Activated B cell treated with CpG ODN at 0.5 μM for 24 hours (primary cell): ENCODE measurements at regions of chr2 and their contacts with region 1.

Region 1: GRCh38 chr2:223822818-223823217 is 14.6 kb downstream of the AP1S3 start:
- DNase-seq: no peak
- ATAC-seq: peak; percentile 74
- H3K4me3 Mint-ChIP-seq: peak overlapping the region; percentile 63
- H3K27ac Mint-ChIP-seq: peak overlapping the region; percentile 26
- H3K4me1 Mint-ChIP-seq: peaks cover 71% of the 10 kb centered on the region
- H3K27me3 Mint-ChIP-seq: no peaks in the 10 kb centered on the region
- CTCF ChIP-seq: no peak

Region 2: DNA sequence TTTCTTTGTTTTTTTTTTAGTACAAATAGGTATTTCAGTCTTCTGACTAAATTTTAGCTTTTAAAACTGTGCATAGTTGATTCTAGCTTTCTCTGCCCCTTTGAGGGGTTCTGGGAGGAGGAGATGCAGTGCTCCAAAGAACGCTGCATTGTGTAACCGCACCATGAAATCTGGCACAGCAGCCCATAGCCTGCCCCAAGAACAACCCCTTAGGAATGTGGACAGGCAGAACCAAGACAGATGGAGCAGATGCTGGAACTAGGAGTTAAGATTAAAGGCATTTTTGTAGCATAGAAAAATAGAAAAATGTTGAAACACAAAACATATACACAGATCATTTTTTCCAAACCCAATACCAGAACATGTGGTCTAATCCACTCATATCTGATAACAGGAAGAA is 408.2 kb before region 1 on chr2:
- CTCF ChIA-PET with region 1: no interaction called
- POLR2A ChIA-PET with region 1: no interaction called
- intact Hi-C with region 1: no loop called
- DNase-seq: no peak
- ATAC-seq: no peak
- H3K4me3 Mint-ChIP-seq: no peak overlapping the region
- H3K27ac Mint-ChIP-seq: no peak overlapping the region
- H3K4me1 Mint-ChIP-seq: no peaks in the 10 kb centered on the region
- H3K27me3 Mint-ChIP-seq: no peaks in the 10 kb centered on the region
- CTCF ChIP-seq: no peak

Region 3: GRCh38 chr2:223846525-223846924 is 23.7 kb after region 1 on chr2:
- CTCF ChIA-PET with region 1: no interaction called
- POLR2A ChIA-PET with region 1: interaction called, 12 read pairs
- intact Hi-C with region 1: no loop called
- DNase-seq: no peak
- ATAC-seq: no peak
- H3K4me3 Mint-ChIP-seq: no peak overlapping the region
- H3K27ac Mint-ChIP-seq: no peak overlapping the region
- H3K4me1 Mint-ChIP-seq: peaks cover 11% of the 10 kb centered on the region
- H3K27me3 Mint-ChIP-seq: no peaks in the 10 kb centered on the region
- CTCF ChIP-seq: no peak